Natural killer cell (primary cell): ENCODE measurements at regions of chr1 and their contacts with region 1.

Region 1: DNA sequence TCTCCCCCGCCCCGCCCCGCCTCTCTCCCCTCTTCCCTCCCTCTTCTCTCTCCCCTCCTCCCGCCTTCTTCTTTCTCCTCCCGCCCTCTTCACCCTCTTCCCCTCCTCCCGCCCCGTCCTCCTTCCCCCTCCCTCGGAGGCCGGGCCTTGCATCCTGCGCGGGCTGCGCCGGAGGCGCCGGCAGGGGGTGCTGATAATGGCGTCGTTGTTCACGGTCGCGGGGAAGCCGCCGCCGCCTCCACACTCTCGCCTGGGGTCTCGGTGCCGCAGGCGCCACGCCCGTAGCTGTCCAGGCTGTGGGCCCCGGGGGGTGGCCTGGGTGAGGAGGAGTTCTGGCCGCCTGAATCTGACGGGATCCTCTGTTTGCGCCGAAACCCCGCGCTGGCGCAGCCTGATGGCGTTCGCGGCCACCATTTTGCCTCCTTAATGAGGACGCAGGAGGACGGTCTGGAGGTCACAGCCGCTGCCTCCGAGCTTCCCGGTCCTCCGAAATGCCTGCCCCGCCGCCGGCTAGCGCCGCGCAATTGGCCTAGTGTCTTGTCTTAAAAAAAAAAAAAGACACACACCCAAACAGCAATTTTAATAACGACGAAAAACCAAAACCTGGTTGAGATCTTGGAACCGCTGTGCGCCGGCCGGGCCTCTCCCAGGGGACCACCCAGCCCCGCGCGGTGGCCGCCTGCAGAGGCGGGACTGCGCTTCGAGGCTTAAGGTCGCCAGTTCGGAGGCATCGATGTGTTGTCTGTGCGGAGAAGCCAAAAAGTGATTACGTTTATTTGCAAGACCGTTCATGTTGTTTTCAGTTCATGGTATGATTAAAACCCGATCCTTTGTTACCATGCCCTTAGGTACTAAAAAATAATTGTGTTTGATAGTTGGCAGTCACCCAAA is 106.6 kb upstream of the HNRNPU start:
- DNase-seq: peak; percentile 88 to 96
- ATAC-seq: peak; percentile 79 to 92 (median 79)
- H3K4me3 ChIP-seq: peak overlapping the region; percentile 85
- H3K4me3 Mint-ChIP-seq: peak overlapping the region; percentile 95
- H3K27ac ChIP-seq: peak overlapping the region; percentile 100
- H3K27ac Mint-ChIP-seq: peak overlapping the region; percentile 98 to 99
- H3K4me1 ChIP-seq: peaks cover 5% of the 10 kb centered on the region
- H3K4me1 Mint-ChIP-seq: peaks cover 13 to 14% of the 10 kb centered on the region in 2 donors
- H3K27me3 ChIP-seq: no peaks in the 10 kb centered on the region
- H3K27me3 Mint-ChIP-seq: no peaks in the 10 kb centered on the region
- CTCF ChIP-seq: peak; percentile 19

Region 2: DNA sequence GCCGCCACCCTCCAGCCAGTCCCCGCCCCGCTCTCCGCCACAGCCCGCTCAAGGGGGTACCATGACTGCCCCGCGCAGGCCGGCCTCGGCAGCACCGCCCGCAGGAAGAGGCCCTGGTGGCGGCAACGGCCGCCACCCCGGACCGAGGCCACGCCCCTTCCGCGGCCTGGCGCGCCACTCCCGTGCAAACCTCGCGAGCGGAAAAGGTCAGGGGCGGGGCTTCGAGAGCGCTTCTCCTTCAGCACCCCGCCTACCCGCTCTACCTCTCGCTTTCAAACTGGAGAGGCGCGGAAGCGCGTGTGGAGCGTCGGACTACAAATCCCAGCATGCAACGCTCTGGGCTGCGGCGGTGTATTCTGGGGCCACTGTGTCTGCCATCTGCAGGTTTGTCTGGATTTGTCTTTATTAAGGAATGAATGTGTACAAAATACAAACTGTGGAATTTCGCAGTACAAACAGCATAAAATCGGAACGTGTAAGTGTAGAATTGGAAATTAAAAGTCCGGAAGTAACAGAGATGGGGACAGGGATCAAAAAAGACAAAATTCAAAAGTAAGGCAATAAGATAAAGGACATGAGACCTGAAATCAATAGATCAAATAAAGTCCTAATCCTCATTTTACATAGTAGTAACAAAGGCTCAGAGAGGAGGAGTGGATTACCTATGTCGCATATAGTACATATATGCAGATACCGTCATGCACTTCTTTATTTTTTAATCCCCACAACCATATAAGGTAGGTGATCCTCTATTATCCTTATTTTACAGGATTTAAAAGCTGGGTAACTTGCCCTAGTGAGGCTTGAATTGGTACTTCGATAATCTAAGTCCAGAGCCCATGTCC is 518.7 kb before region 1 on chr1:
- intact Hi-C with region 1: loop called (anchors 5 kb)
- DNase-seq: peak; percentile 98 to 100
- ATAC-seq: peak; percentile 85 to 96 (median 90)
- H3K4me3 ChIP-seq: peak overlapping the region; percentile 72
- H3K4me3 Mint-ChIP-seq: peak overlapping the region; percentile 80
- H3K27ac ChIP-seq: peak overlapping the region; percentile 92
- H3K27ac Mint-ChIP-seq: peak overlapping the region; percentile 85 to 88
- H3K4me1 ChIP-seq: peaks cover 9% of the 10 kb centered on the region
- H3K4me1 Mint-ChIP-seq: peaks cover 33 to 37% of the 10 kb centered on the region in 2 donors
- H3K27me3 ChIP-seq: no peaks in the 10 kb centered on the region
- H3K27me3 Mint-ChIP-seq: no peaks in the 10 kb centered on the region
- CTCF ChIP-seq: peak; percentile 31

Region 3: DNA sequence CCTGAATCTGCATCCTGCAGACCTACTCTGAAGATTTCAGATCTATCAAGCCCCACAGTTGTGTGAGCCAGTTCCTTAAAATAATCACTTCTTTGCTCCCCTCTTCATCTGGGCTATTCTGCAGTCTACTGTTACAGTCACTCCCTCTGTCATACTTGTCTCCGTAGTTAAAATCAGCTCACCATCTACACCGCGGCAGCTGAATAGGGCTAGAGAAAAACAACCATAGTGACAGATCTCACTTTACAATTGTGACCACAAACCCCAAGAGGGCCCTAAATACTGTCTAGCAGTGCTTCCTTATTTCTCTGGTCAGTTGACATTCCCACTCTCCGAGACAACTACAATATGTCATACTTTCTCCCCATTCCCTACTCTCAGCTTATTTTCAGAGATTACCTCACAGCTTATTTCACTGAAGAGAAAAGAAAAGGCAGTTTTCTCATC is 305.1 kb before region 1 on chr1:
- intact Hi-C with region 1: loop called (anchors 5 kb)
- DNase-seq: peak; percentile 15 to 19
- ATAC-seq: peak; percentile 93 to 98 (median 96)
- H3K4me3 ChIP-seq: no peak overlapping the region
- H3K4me3 Mint-ChIP-seq: no peak overlapping the region
- H3K27ac ChIP-seq: no peak overlapping the region
- H3K27ac Mint-ChIP-seq: no peak overlapping the region
- H3K4me1 ChIP-seq: peaks cover 3% of the 10 kb centered on the region
- H3K4me1 Mint-ChIP-seq: peaks cover 8 to 24% of the 10 kb centered on the region in 2 donors
- H3K27me3 ChIP-seq: no peaks in the 10 kb centered on the region
- H3K27me3 Mint-ChIP-seq: no peaks in the 10 kb centered on the region
- CTCF ChIP-seq: no peak

Region 4: GRCh38 chr1:244864253-244865027 is 106.5 kb before region 1 on chr1 and contains the start of gene HNRNPU:
- intact Hi-C with region 1: loop called (anchors 1 kb)
- DNase-seq: peak; percentile 97 to 99
- ATAC-seq: peak; percentile 63 to 87 (median 65)
- H3K4me3 ChIP-seq: peak within 1 kb of the TSS; percentile 94
- H3K4me3 Mint-ChIP-seq: peak within 1 kb of the TSS; percentile 98
- H3K27ac ChIP-seq: peak within 1 kb of the TSS; percentile 92
- H3K27ac Mint-ChIP-seq: peak within 1 kb of the TSS; percentile 93 to 98
- H3K4me1 ChIP-seq: peaks cover 21% of the 10 kb centered on the region
- H3K4me1 Mint-ChIP-seq: peaks cover 50 to 63% of the 10 kb centered on the region in 2 donors
- H3K27me3 ChIP-seq: no peaks in the 10 kb centered on the region
- H3K27me3 Mint-ChIP-seq: no peaks in the 10 kb centered on the region
- CTCF ChIP-seq: peak; percentile 51
- total RNA-seq, gene HNRNPU: 467 to 603 (median 504) TPM

Region 5: GRCh38 chr1:245045087-245045881 is 74.4 kb after region 1 on chr1:
- intact Hi-C with region 1: loop called (anchors 1 kb)
- DNase-seq: no peak
- ATAC-seq: no peak
- H3K4me3 ChIP-seq: no peak overlapping the region
- H3K4me3 Mint-ChIP-seq: no peak overlapping the region
- H3K27ac ChIP-seq: no peak overlapping the region
- H3K27ac Mint-ChIP-seq: no peak overlapping the region
- H3K4me1 ChIP-seq: no peaks in the 10 kb centered on the region
- H3K4me1 Mint-ChIP-seq: no peaks in the 10 kb centered on the region
- H3K27me3 ChIP-seq: no peaks in the 10 kb centered on the region
- H3K27me3 Mint-ChIP-seq: no peaks in the 10 kb centered on the region
- CTCF ChIP-seq: no peak